Ovary (tissue), 10 donors: ENCODE measurements at regions of chr3 and their contacts with region 1.

Region 1: GRCh38 chr3:192566706-192567290 is 160.5 kb downstream of the FGF12 start:
- DNase-seq: peak; percentile 50 to 73 (median 64)
- H3K4me3 ChIP-seq: no peak overlapping the region
- H3K27ac ChIP-seq: no peak overlapping the region
- H3K4me1 ChIP-seq: no peaks in the 10 kb centered on the region
- H3K27me3 ChIP-seq: no peaks in the 10 kb centered on the region
- CTCF ChIP-seq: peak; percentile 35 to 49 (median 45)
- EP300 ChIP-seq: no peak
- POLR2A ChIP-seq: no peak

Region 2: GRCh38 chr3:192433704-192434103 is 133.1 kb before region 1 on chr3:
- intact Hi-C with region 1: no loop called
- DNase-seq: no peak
- H3K4me3 ChIP-seq: no peak overlapping the region
- H3K27ac ChIP-seq: no peak overlapping the region
- H3K4me1 ChIP-seq: no peaks in the 10 kb centered on the region
- H3K27me3 ChIP-seq: no peaks in the 10 kb centered on the region
- CTCF ChIP-seq: no peak
- EP300 ChIP-seq: no peak
- POLR2A ChIP-seq: no peak

Region 3: DNA sequence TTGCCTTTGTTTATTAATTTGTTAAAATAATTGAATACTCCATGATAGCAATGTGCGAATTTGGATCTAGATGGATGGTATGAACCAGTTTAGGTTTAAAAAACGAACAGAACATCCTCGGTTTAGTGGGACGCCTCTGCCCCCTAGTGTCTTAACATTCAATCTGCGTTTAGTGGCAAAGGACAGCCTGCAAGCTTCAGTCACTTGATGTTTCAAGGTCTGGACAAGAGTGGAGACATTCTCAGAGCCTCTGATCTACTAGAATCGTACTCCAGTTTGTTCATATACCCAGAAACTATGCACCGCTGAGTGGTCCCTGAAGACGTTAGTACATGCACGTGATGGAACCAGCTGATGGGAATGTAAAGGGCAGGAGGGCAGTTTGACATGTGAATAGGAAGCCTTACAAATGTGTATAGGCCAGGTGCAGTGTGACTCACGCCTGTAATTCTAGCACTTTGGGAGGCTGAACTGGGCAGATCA is 1005.7 kb after region 1 on chr3:
- intact Hi-C with region 1: loop called in 1 of 4 experiments (anchors 2 kb)
- DNase-seq: peak; percentile 38 to 59 (median 44)
- H3K4me3 ChIP-seq: no peak overlapping the region
- H3K27ac ChIP-seq: no peak overlapping the region
- H3K4me1 ChIP-seq: no peaks in the 10 kb centered on the region
- H3K27me3 ChIP-seq: no peaks in the 10 kb centered on the region
- CTCF ChIP-seq: peak; percentile 32 to 60 (median 43)
- EP300 ChIP-seq: no peak
- POLR2A ChIP-seq: no peak